Breast epithelium (tissue), 4 donors: ENCODE measurements at regions of chr10 and their contacts with region 1.

Region 1: GRCh38 chr10:101020427-101021075 is 10.4 kb downstream of the PDZD7 start:
- DNase-seq: no peak
- H3K4me3 ChIP-seq: no peak overlapping the region
- H3K27ac ChIP-seq: no peak overlapping the region
- H3K4me1 ChIP-seq: peaks cover 0 to 3% of the 10 kb centered on the region in 2 donors
- H3K27me3 ChIP-seq: no peaks in the 10 kb centered on the region
- CTCF ChIP-seq: no peak
- POLR2A ChIP-seq: no peak

Region 2: DNA sequence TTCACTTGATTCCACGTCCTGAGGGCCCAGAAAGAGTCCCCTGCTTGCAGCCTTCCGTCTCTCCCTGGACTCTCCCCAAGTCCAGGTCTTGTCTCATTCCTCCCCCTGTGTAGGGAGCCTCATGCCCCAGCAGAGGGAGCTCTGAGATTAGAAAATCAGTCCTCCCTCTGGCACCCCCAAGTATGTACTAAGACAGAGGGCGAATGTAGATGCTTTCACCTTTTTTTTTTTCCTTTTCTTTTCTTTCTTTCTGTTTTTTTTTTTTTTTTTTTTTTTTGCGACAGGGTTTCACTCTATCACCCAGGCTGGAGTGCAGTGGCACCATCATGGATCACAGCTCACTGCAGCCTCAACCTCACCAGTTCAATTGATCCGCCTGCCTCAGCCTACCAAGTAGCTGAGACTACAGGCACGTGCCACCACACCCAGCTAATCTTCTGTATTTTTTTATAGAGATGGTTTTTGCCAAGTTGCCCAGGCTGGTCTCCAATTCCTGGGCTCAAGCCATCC is 20.8 kb after region 1 on chr10:
- intact Hi-C with region 1: loop called (anchors 2 kb)
- DNase-seq: peak; percentile 72 to 86
- H3K4me3 ChIP-seq: no peak overlapping the region
- H3K27ac ChIP-seq: peak overlapping the region; percentile 23 to 94
- H3K4me1 ChIP-seq: peaks cover 0 to 5% of the 10 kb centered on the region in 2 donors
- H3K27me3 ChIP-seq: no peaks in the 10 kb centered on the region
- CTCF ChIP-seq: peak; percentile 33 to 88 (median 76)
- POLR2A ChIP-seq: no peak